Head of caudate nucleus (tissue), 42 donors: ENCODE measurements at regions of chr2 and their contacts with region 1.

Region 1: GRCh38 chr2:119753041-119753929 is 6.4 kb upstream of the PTPN4 start:
- DNase-seq: peak in 19 of 42 donors; percentile 14 to 72 (median 37)

Region 2: GRCh38 chr2:119826370-119826961 is 73.2 kb after region 1 on chr2:
- intact Hi-C with region 1: loop called (anchors 5 kb)
- DNase-seq: peak in 23 of 42 donors; percentile 4 to 68 (median 37)